ENCODE measurements at regions of chrX and their contacts with region 1.

Region 1: GRCh38 chrX:115147220-115147619 is 42.0 kb upstream of the RBMXL3 start:
- DNase-seq: no peak
- H3K4me3 Mint-ChIP-seq: no peak overlapping the region
- H3K27ac Mint-ChIP-seq: no peak overlapping the region
- H3K4me1 Mint-ChIP-seq: no peaks in the 10 kb centered on the region
- H3K27me3 Mint-ChIP-seq: no peaks in the 10 kb centered on the region

Region 2: GRCh38 chrX:114611018-114611619 is 536.1 kb before region 1 on chrX:
- CTCF ChIA-PET with region 1: no interaction called
- POLR2A ChIA-PET with region 1: no interaction called
- intact Hi-C with region 1: loop called (anchors 5 kb)
- DNase-seq: no peak
- H3K4me3 Mint-ChIP-seq: no peak overlapping the region
- H3K27ac Mint-ChIP-seq: no peak overlapping the region
- H3K4me1 Mint-ChIP-seq: no peaks in the 10 kb centered on the region
- H3K27me3 Mint-ChIP-seq: no peaks in the 10 kb centered on the region

Measured in activated CD4-positive, alpha-beta memory T cell treated with anti-CD3 and anti-CD28 coated beads for 36 hours (primary cell).